CD4-positive, alpha-beta T cell (primary cell): ENCODE measurements at regions of chr5 and their contacts with region 1.

Region 1: DNA sequence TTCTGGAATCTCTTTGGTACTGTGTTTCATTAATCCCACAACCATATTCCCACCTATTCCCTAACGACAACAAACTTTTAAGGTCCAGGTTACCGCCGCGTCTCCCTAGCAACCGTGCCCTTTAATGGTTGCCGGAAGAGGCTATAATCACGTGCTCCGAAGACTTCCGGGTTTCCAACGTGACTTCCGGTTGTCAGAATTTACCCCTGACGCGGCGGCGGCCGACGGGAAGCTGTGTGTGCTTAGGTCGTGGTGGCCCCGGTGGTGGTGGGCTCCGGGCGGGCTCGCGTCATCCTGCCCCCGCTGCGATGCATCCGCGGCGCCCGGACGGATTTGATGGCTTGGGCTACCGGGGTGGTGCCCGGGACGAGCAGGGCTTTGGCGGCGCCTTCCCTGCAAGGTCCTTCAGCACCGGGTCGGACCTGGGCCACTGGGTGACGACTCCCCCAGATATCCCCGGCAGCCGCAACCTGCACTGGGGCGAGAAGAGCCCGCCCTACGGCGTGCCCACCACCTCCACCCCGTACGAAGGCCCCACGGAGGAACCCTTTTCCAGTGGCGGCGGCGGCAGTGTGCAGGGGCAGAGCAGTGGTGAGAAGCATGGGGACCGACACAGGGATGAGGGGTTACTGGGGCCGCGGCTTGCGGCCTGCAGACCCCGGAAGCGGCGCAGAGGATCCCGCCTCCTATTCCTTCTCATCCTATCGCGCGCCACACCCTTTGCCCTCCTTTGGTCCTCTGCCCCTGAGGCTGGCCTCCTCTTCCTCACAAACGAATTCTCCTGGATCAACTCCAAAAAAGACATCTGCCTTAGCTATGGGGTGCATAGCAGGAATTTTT is at the start of gene SLC25A46:
- DNase-seq: peak; percentile 77 to 95 (median 82)
- ATAC-seq: peak; percentile 78
- H3K4me3 ChIP-seq: peak within 1 kb of the TSS; percentile 92
- H3K4me3 Mint-ChIP-seq: peak within 1 kb of the TSS; percentile 96
- H3K27ac ChIP-seq: peak within 1 kb of the TSS; percentile 91 to 92
- H3K27ac Mint-ChIP-seq: peak within 1 kb of the TSS; percentile 94
- H3K4me1 ChIP-seq: peaks cover 11% of the 10 kb centered on the region
- H3K4me1 Mint-ChIP-seq: peaks cover 40% of the 10 kb centered on the region
- H3K27me3 ChIP-seq: no peaks in the 10 kb centered on the region
- H3K27me3 Mint-ChIP-seq: peaks cover 13% of the 10 kb centered on the region
- CTCF ChIP-seq: no peak
- total RNA-seq, gene SLC25A46: 14.0 to 16.1 TPM

Region 2: GRCh38 chr5:108748401-108749127 is 1990.5 kb before region 1 on chr5:
- CTCF ChIA-PET with region 1: no interaction called
- POLR2A ChIA-PET with region 1: no interaction called
- intact Hi-C with region 1: loop called in 1 of 2 experiments (anchors 5 kb)
- DNase-seq: peak; percentile 92 to 99 (median 96)
- ATAC-seq: peak; percentile 91
- H3K4me3 ChIP-seq: peak overlapping the region; percentile 98
- H3K4me3 Mint-ChIP-seq: peak overlapping the region; percentile 96
- H3K27ac ChIP-seq: peak overlapping the region; percentile 91 to 92
- H3K27ac Mint-ChIP-seq: peak overlapping the region; percentile 91
- H3K4me1 ChIP-seq: peaks cover 18% of the 10 kb centered on the region
- H3K4me1 Mint-ChIP-seq: peaks cover 21% of the 10 kb centered on the region
- H3K27me3 ChIP-seq: peaks cover 0 to 5% of the 10 kb centered on the region in 2 experiments
- H3K27me3 Mint-ChIP-seq: peaks cover 4% of the 10 kb centered on the region
- CTCF ChIP-seq: no peak

Region 3: DNA sequence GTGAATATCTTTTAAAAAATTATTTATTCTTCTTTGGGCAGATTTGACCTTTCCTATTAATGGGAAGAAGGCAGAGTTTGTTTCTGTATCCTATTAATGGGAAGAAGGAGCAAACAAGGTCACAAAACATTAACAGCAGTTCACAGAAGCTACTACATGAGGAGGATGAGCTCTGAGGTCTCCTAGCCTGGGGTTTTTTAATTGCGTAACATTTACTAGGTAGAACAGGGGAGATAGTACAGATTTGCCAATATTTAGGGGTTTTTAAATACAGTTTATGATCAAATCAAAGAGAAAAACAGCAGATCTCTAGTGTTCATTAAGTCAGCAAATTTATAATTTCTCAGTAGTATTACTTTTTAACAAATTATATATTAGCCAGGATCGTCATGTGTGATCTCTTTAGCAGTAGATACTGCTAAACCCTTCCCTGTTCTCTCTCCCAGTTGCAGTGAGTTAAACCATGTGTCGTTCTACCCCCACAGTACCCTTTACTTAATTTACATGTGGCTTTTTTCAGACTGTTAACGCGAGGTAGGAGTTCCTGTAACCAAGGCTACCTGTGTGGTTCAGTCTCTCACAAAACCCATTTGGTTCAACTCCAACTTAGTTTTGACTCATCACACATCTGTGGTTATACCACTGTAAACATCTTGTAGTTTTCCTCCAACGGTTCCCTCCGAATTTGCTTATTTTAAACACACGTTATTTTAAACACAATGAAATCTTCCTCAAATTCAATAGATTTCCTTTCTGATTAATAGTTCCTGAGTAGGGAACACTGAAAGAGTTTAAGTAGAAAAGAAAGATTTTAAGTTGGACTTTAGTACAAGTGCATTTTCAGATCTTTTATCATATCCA is 13.1 kb after region 1 on chr5:
- CTCF ChIA-PET with region 1: interaction called, 5 read pairs
- POLR2A ChIA-PET with region 1: interaction called, 4 read pairs
- intact Hi-C with region 1: loop called in 1 of 2 experiments (anchors 2 kb)
- DNase-seq: peak in 6 of 14 experiments; percentile 2 to 76 (median 37)
- ATAC-seq: peak; percentile 87
- H3K4me3 ChIP-seq: no peak overlapping the region
- H3K4me3 Mint-ChIP-seq: peak overlapping the region; percentile 0
- H3K27ac ChIP-seq: peak overlapping the region in 1 of 2 donors; percentile 16
- H3K27ac Mint-ChIP-seq: peak overlapping the region; percentile 84
- H3K4me1 ChIP-seq: peaks cover 4% of the 10 kb centered on the region
- H3K4me1 Mint-ChIP-seq: peaks cover 49% of the 10 kb centered on the region
- H3K27me3 ChIP-seq: no peaks in the 10 kb centered on the region
- H3K27me3 Mint-ChIP-seq: no peaks in the 10 kb centered on the region
- CTCF ChIP-seq: no peak

Region 4: DNA sequence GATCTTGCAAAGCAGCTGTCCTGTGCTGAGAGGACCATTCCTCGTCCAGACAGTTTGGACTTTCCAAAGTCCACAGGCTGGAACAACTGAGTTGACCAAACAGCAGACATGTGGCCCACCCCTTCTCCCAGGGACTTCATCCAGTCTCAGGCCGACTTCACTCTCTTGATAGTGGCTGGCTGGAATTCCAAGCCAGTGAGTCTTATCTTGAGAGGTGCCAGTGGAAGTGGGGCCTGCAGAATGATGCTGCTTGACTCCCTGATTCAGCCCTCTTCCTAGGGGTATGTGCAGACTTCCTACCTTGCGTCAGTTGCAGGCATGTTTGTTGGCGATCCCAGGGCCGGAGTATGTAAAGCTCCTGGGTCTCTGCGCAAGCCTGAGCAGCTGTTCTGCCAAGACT is 201.1 kb after region 1 on chr5:
- CTCF ChIA-PET with region 1: no interaction called
- POLR2A ChIA-PET with region 1: no interaction called
- intact Hi-C with region 1: no loop called
- DNase-seq: no peak
- ATAC-seq: no peak
- H3K4me3 ChIP-seq: no peak overlapping the region
- H3K4me3 Mint-ChIP-seq: no peak overlapping the region
- H3K27ac ChIP-seq: no peak overlapping the region
- H3K27ac Mint-ChIP-seq: no peak overlapping the region
- H3K4me1 ChIP-seq: no peaks in the 10 kb centered on the region
- H3K4me1 Mint-ChIP-seq: no peaks in the 10 kb centered on the region
- H3K27me3 ChIP-seq: no peaks in the 10 kb centered on the region
- H3K27me3 Mint-ChIP-seq: peaks cover 8% of the 10 kb centered on the region
- CTCF ChIP-seq: no peak

Region 5: DNA sequence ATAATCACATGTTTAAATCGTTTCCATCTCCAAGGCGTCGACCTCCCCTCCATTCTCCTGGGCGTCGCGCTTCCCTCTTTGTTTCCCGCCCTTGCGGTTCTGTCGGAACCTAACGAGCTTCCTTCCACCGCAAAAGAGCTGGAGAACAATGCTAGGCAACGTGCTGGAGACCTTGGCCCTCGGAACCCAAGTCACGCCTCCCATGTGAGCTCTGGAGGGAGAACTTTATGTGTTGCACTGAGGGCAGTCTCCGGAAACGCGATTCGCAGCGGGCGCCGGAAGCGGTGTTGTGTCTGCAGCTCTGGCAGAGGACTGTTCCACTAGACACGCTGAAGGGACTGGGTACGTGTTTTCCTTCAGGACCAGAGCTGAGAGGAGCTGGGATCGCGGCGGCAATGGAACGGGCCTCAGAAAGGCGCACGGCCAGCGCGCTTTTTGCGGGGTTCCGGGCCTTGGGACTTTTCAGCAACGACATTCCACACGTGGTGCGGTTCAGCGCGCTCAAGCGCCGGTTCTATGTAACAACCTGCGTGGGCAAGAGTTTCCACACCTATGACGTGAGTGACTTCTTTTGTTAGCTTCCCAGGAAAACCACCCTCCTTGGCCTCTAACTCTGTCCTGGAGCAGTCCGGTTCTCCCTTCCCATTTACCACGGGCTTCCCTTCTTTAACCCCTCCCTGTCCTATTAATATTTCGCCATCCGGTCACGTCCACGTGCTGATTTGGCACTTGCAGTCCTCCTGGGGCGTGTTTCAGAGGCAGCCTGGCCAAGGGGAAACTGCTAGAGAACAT is 353.2 kb after region 1 on chr5 and contains the start of gene WDR36:
- CTCF ChIA-PET with region 1: interaction called, 4 read pairs
- POLR2A ChIA-PET with region 1: interaction called, 8 read pairs
- intact Hi-C with region 1: loop called in 1 of 2 experiments (anchors 2 kb)
- DNase-seq: peak; percentile 78 to 93 (median 86)
- ATAC-seq: peak; percentile 93
- H3K4me3 ChIP-seq: peak within 1 kb of the TSS; percentile 89
- H3K4me3 Mint-ChIP-seq: peak within 1 kb of the TSS; percentile 90
- H3K27ac ChIP-seq: peak within 1 kb of the TSS; percentile 68 to 85
- H3K27ac Mint-ChIP-seq: peak within 1 kb of the TSS; percentile 94
- H3K4me1 ChIP-seq: peaks cover 9% of the 10 kb centered on the region
- H3K4me1 Mint-ChIP-seq: peaks cover 41% of the 10 kb centered on the region
- H3K27me3 ChIP-seq: no peaks in the 10 kb centered on the region
- H3K27me3 Mint-ChIP-seq: peaks cover 9% of the 10 kb centered on the region
- CTCF ChIP-seq: no peak
- total RNA-seq, gene WDR36: 22.0 to 22.4 TPM

Region 6: GRCh38 chr5:112154940-112155686 is 1416.1 kb after region 1 on chr5:
- CTCF ChIA-PET with region 1: no interaction called
- POLR2A ChIA-PET with region 1: no interaction called
- intact Hi-C with region 1: loop called (anchors 5 kb)
- DNase-seq: peak in 1 of 14 experiments; percentile 29
- ATAC-seq: no peak
- H3K4me3 ChIP-seq: no peak overlapping the region
- H3K4me3 Mint-ChIP-seq: no peak overlapping the region
- H3K27ac ChIP-seq: no peak overlapping the region
- H3K27ac Mint-ChIP-seq: no peak overlapping the region
- H3K4me1 ChIP-seq: peaks cover 1% of the 10 kb centered on the region
- H3K4me1 Mint-ChIP-seq: no peaks in the 10 kb centered on the region
- H3K27me3 ChIP-seq: no peaks in the 10 kb centered on the region
- H3K27me3 Mint-ChIP-seq: no peaks in the 10 kb centered on the region
- CTCF ChIP-seq: no peak

Region 7: DNA sequence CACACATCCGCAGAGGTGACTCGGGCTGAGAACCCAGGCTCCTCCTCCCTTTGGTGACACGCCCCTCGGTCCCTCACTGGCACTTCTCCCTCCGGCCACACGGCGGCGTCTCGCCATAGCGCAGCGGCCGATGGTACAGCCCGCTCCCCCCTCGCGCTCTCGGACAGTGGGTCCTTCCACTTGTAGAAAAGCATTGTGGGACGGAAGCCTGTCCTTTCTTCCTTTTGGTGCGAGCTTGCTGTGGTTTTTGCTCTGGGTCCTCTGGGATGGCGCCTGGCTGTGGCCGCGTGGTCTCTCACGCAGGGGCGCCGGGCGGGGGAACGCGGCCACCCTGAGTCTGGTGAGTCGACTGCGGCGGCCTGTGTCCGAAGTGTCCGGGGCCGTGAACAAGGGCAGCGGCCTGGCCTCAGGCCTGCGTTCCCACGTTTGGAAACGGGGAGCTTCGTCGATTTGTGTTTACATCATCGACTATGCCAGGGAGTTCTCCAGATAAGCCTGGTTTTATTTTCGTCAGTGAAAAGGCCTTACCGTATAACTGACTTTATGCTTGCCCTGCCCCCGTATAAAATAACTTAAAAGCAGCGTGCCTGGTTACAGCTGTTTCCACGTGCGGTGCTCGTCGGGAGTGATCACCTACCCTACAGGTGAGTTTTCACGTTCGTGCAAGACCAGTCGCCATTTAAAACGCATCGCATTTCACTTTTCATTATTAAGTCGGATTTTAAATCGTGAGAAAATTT is 1421.8 kb after region 1 on chr5:
- CTCF ChIA-PET with region 1: no interaction called
- POLR2A ChIA-PET with region 1: interaction called, 3 read pairs
- intact Hi-C with region 1: loop called (anchors 5 kb)
- DNase-seq: peak; percentile 85 to 96 (median 91)
- ATAC-seq: peak; percentile 96
- H3K4me3 ChIP-seq: peak overlapping the region; percentile 94
- H3K4me3 Mint-ChIP-seq: peak overlapping the region; percentile 91
- H3K27ac ChIP-seq: peak overlapping the region; percentile 70 to 72
- H3K27ac Mint-ChIP-seq: peak overlapping the region; percentile 73
- H3K4me1 ChIP-seq: peaks cover 16% of the 10 kb centered on the region
- H3K4me1 Mint-ChIP-seq: peaks cover 21% of the 10 kb centered on the region
- H3K27me3 ChIP-seq: no peaks in the 10 kb centered on the region
- H3K27me3 Mint-ChIP-seq: no peaks in the 10 kb centered on the region
- CTCF ChIP-seq: peak; percentile 96